T-cell (primary cell): ENCODE measurements at regions of chr6 and their contacts with region 1.

Region 1: DNA sequence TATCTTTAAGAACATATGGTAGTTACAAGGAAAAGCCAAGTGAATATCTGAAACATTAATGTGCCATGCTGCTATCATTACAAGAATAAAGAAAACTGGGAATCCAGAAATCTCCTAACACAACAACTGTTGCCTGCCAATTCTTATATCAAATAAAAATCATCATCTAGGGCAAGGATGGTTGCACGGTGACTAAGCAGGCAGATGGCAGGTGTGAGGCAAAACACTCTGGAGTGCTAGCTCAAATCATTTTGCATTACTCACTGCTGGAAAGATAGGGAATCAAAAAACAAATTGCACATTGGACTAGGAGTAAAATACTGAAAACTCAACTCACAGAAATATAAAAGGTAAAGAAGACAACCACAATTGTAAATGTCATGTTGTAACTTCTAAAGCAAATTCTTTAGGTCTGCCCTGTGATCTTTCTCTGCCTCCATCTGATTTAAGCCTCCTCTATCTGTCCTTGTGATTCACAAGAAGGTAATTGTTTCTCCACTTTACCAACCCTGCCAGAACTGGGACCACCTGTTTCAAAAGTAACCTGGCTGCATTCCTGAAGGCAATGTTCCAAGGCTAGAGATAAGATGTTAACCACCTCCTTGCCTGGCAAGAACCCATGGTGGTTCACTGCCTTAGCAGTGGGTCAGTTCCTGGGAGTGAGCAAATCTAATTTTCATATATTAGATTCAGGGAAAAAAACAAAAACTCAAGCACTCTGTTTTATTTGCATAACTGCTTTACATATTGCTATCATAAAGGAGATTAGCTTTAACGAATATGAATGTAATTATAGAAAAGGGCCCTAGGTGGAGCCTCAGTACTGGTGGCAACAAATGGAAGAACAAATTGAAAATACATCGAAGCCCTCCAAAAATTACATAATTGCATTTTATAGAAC is 33.1 kb upstream of the LCA5 start:
- DNase-seq: peak in 1 of 35 experiments; percentile 46
- ATAC-seq: peak in 2 of 4 experiments; percentile 44 to 50
- H3K4me3 ChIP-seq: no peak overlapping the region
- H3K4me3 Mint-ChIP-seq: no peak overlapping the region
- H3K27ac ChIP-seq: no peak overlapping the region
- H3K27ac Mint-ChIP-seq: no peak overlapping the region
- H3K4me1 ChIP-seq: peaks cover 0 to 3% of the 10 kb centered on the region in 2 experiments
- H3K4me1 Mint-ChIP-seq: peaks cover 0 to 9% (median 4%) of the 10 kb centered on the region in 3 donors
- H3K27me3 ChIP-seq: no peaks in the 10 kb centered on the region
- H3K27me3 Mint-ChIP-seq: no peaks in the 10 kb centered on the region

Region 2: GRCh38 chr6:79520534-79520933 is 49.8 kb before region 1 on chr6:
- CTCF ChIA-PET with region 1: no interaction called
- POLR2A ChIA-PET with region 1: no interaction called
- DNase-seq: no peak
- ATAC-seq: no peak
- H3K4me3 ChIP-seq: no peak overlapping the region
- H3K4me3 Mint-ChIP-seq: no peak overlapping the region
- H3K27ac ChIP-seq: no peak overlapping the region
- H3K27ac Mint-ChIP-seq: no peak overlapping the region
- H3K4me1 ChIP-seq: no peaks in the 10 kb centered on the region
- H3K4me1 Mint-ChIP-seq: no peaks in the 10 kb centered on the region
- H3K27me3 ChIP-seq: no peaks in the 10 kb centered on the region
- H3K27me3 Mint-ChIP-seq: no peaks in the 10 kb centered on the region

Region 3: DNA sequence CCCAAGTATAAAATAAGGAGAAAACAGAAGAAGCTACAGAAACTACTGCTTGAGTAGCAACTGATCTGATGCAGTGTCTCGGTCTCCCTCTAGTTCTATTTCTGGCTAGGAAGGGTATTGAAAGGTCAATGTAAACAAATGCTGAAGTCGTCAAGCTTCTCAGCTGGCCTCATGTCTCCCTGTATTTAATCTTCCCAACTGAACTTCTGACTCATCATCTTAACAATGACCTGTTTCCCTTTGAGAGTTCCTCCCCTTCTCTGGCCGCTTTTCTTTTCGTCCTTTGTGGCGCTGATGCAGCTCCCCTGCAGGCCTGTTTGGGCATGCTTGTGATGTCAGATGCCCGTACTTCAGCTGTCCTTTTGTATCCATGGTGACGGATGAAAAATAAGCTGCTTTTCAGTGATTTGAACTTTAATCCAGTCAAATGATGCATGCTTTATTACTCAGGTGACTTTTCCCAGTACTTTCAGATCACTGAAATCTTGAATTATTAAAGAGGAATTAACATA is 25.4 kb before region 1 on chr6:
- CTCF ChIA-PET with region 1: no interaction called
- POLR2A ChIA-PET with region 1: no interaction called
- DNase-seq: peak in 4 of 35 experiments; percentile 3 to 37 (median 8)
- ATAC-seq: no peak
- H3K4me3 ChIP-seq: no peak overlapping the region
- H3K4me3 Mint-ChIP-seq: no peak overlapping the region
- H3K27ac ChIP-seq: no peak overlapping the region
- H3K27ac Mint-ChIP-seq: peak overlapping the region in 1 of 2 donors; percentile 7
- H3K4me1 ChIP-seq: no peaks in the 10 kb centered on the region
- H3K4me1 Mint-ChIP-seq: peaks cover 2 to 5% (median 3%) of the 10 kb centered on the region in 3 donors
- H3K27me3 ChIP-seq: no peaks in the 10 kb centered on the region
- H3K27me3 Mint-ChIP-seq: peaks cover 8 to 16% of the 10 kb centered on the region in 2 donors

Region 4: GRCh38 chr6:79672631-79673111 is 102.3 kb after region 1 on chr6:
- CTCF ChIA-PET with region 1: interaction called in 1 of 2 experiments, 13 read pairs
- POLR2A ChIA-PET with region 1: no interaction called
- DNase-seq: peak in 1 of 35 experiments; percentile 22
- ATAC-seq: peak in 2 of 4 experiments; percentile 5 to 45
- H3K4me3 ChIP-seq: no peak overlapping the region
- H3K4me3 Mint-ChIP-seq: no peak overlapping the region
- H3K27ac ChIP-seq: no peak overlapping the region
- H3K27ac Mint-ChIP-seq: peak overlapping the region; percentile 89 to 95
- H3K4me1 ChIP-seq: peaks cover 15 to 16% of the 10 kb centered on the region in 2 experiments
- H3K4me1 Mint-ChIP-seq: peaks cover 36 to 55% (median 37%) of the 10 kb centered on the region in 3 donors
- H3K27me3 ChIP-seq: no peaks in the 10 kb centered on the region
- H3K27me3 Mint-ChIP-seq: no peaks in the 10 kb centered on the region

Region 5: GRCh38 chr6:80182291-80182690 is 611.9 kb after region 1 on chr6:
- CTCF ChIA-PET with region 1: no interaction called
- POLR2A ChIA-PET with region 1: no interaction called
- DNase-seq: no peak
- ATAC-seq: no peak
- H3K4me3 ChIP-seq: no peak overlapping the region
- H3K4me3 Mint-ChIP-seq: no peak overlapping the region
- H3K27ac ChIP-seq: no peak overlapping the region
- H3K27ac Mint-ChIP-seq: no peak overlapping the region
- H3K4me1 ChIP-seq: no peaks in the 10 kb centered on the region
- H3K4me1 Mint-ChIP-seq: no peaks in the 10 kb centered on the region
- H3K27me3 ChIP-seq: no peaks in the 10 kb centered on the region
- H3K27me3 Mint-ChIP-seq: no peaks in the 10 kb centered on the region